ENCODE measurements at regions of chr2 and their contacts with region 1.

Region 1: GRCh38 chr2:223993621-223994232 is 36.5 kb downstream of the MRPL44 start:
- DNase-seq: peak; percentile 11 to 67 (median 62)
- ATAC-seq: peak; percentile 83
- H3K4me3 ChIP-seq: no peak overlapping the region
- H3K4me3 Mint-ChIP-seq: no peak overlapping the region
- H3K27ac ChIP-seq: no peak overlapping the region
- H3K27ac Mint-ChIP-seq: no peak overlapping the region
- H3K4me1 ChIP-seq: no peaks in the 10 kb centered on the region
- H3K4me1 Mint-ChIP-seq: peaks cover 0 to 22% (median 0%) of the 10 kb centered on the region in 7 donors
- H3K27me3 ChIP-seq: no peaks in the 10 kb centered on the region
- H3K27me3 Mint-ChIP-seq: no peaks in the 10 kb centered on the region

Region 2: DNA sequence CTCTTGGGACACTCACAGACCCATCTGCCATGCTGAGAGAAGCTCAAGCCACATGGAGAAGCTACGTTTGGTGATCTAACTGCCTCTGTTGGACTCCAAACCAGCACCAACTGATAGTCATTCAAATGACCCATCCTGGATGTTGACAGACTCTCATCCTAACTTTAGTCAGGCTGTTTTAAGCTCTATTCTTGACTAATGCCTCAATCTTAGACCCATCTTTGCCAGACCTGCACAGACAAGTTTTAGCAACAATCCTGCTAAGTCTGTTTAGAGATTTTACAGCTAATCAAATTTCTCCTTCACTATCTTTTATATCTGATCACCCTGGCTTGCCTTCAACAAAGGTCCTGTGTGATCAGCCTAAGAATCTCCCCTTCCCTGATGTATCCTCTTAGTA is 636.7 kb before region 1 on chr2:
- CTCF ChIA-PET with region 1: no interaction called
- POLR2A ChIA-PET with region 1: no interaction called
- intact Hi-C with region 1: no loop called
- DNase-seq: no peak
- ATAC-seq: no peak
- H3K4me3 ChIP-seq: no peak overlapping the region
- H3K4me3 Mint-ChIP-seq: no peak overlapping the region
- H3K27ac ChIP-seq: no peak overlapping the region
- H3K27ac Mint-ChIP-seq: no peak overlapping the region
- H3K4me1 ChIP-seq: no peaks in the 10 kb centered on the region
- H3K4me1 Mint-ChIP-seq: no peaks in the 10 kb centered on the region
- H3K27me3 ChIP-seq: no peaks in the 10 kb centered on the region
- H3K27me3 Mint-ChIP-seq: no peaks in the 10 kb centered on the region

Region 3: GRCh38 chr2:223970343-223971128 is 23.2 kb before region 1 on chr2:
- CTCF ChIA-PET with region 1: interaction called, 43 read pairs
- POLR2A ChIA-PET with region 1: no interaction called
- intact Hi-C with region 1: loop called (anchors 1 kb)
- DNase-seq: peak in 8 of 9 donors; percentile 27 to 62 (median 54)
- ATAC-seq: peak; percentile 87
- H3K4me3 ChIP-seq: no peak overlapping the region
- H3K4me3 Mint-ChIP-seq: no peak overlapping the region
- H3K27ac ChIP-seq: no peak overlapping the region
- H3K27ac Mint-ChIP-seq: peak overlapping the region in 1 of 9 donors; percentile 28
- H3K4me1 ChIP-seq: no peaks in the 10 kb centered on the region
- H3K4me1 Mint-ChIP-seq: peaks cover 0 to 14% (median 4%) of the 10 kb centered on the region in 7 donors
- H3K27me3 ChIP-seq: no peaks in the 10 kb centered on the region
- H3K27me3 Mint-ChIP-seq: no peaks in the 10 kb centered on the region

Region 4: DNA sequence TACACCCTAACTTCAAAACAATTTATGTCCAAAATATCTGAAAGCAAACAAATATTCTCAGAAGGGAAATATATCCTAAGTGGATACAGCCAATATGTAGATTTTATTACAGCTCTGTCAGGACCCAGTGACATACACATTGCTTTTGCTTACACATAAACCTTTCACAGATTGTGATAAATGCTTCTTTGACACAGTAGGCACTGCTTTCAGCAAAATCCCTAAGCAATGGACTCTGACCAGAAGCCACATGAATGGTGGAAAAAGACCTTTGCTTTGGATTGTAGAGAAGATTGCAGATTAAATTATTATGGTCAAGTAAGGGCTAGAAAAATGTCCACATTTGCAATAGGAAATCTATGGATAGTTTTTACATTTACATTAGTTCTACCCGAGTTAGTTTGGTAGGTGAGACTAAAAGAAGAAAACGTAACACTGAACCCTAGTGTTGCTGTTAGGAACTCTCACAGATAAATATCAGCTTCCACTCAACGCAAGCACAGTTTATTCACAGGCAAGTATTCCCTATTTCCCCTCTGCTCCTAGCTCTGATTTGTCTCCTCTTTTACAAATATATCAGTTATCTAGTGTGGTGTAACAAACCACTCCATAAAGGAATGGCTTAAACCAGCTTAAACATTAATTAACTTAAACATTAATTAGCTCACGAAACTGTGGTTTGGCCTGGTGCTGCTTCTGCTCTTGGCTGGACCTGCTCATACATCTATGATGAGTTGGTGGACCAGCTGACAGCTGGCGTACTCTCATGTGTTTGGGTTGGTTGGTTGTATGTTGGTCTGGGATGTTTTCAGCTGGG is 69.0 kb after region 1 on chr2:
- CTCF ChIA-PET with region 1: interaction called, 46 read pairs
- POLR2A ChIA-PET with region 1: no interaction called
- intact Hi-C with region 1: loop called (anchors 1 kb)
- DNase-seq: peak in 4 of 9 donors; percentile 5 to 15 (median 13)
- ATAC-seq: no peak
- H3K4me3 ChIP-seq: no peak overlapping the region
- H3K4me3 Mint-ChIP-seq: no peak overlapping the region
- H3K27ac ChIP-seq: no peak overlapping the region
- H3K27ac Mint-ChIP-seq: no peak overlapping the region
- H3K4me1 ChIP-seq: no peaks in the 10 kb centered on the region
- H3K4me1 Mint-ChIP-seq: no peaks in the 10 kb centered on the region
- H3K27me3 ChIP-seq: no peaks in the 10 kb centered on the region
- H3K27me3 Mint-ChIP-seq: peaks cover 0 to 6% (median 0%) of the 10 kb centered on the region in 5 donors

Region 5: DNA sequence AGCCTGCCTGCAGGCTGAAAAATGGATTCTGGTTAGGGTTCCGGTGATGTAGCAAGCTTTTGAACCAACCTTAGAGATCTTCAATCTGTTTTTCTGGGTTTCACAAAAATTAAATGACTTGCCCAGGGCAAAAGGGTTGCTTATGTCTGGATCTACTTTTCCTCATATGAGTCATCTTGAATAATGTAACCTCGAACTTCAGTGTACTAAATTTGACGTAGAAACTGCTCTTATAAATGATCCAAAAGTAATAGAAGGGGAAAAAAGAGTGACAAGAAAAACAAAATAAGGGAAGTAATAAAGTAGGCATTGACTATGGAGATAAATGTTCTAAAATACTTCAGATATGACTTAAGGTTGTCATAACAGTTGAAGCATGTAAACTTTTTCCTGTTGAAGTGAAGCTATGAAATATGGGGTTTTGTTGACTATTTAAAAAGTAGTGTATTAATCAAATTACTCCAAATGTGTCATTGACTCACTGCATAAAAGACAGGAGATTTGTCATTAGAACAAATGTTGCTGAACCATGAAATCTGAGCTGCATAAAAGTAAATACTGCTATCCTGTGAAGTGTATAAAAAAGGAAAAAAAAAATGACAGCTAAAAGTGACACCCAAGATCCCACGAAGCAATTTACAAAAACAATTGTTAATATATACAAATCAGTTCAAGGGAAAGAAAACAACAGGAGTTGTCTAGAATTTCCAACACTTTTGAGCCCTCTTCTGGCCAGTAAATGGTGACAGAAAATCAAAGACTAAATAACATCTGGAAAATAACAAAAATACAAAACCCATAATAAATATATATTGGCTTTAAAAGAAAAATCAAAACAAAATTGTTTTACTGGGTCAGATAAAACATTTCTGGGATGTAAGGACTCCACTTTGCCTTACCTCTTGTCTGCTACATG is 148.9 kb after region 1 on chr2:
- CTCF ChIA-PET with region 1: no interaction called
- POLR2A ChIA-PET with region 1: no interaction called
- intact Hi-C with region 1: loop called in 1 of 2 experiments (anchors 1 kb)
- DNase-seq: no peak
- ATAC-seq: no peak
- H3K4me3 ChIP-seq: no peak overlapping the region
- H3K4me3 Mint-ChIP-seq: no peak overlapping the region
- H3K27ac ChIP-seq: no peak overlapping the region
- H3K27ac Mint-ChIP-seq: no peak overlapping the region
- H3K4me1 ChIP-seq: no peaks in the 10 kb centered on the region
- H3K4me1 Mint-ChIP-seq: no peaks in the 10 kb centered on the region
- H3K27me3 ChIP-seq: peaks cover 0 to 2% of the 10 kb centered on the region in 2 donors
- H3K27me3 Mint-ChIP-seq: peaks cover 12 to 34% (median 25%) of the 10 kb centered on the region in 5 donors

Region 6: GRCh38 chr2:224369028-224369632 is 375.4 kb after region 1 on chr2:
- CTCF ChIA-PET with region 1: interaction called, 6 read pairs
- POLR2A ChIA-PET with region 1: no interaction called
- intact Hi-C with region 1: loop called (anchors 1 to 5 kb)
- DNase-seq: peak in 7 of 9 donors; percentile 7 to 38 (median 25)
- ATAC-seq: peak; percentile 61
- H3K4me3 ChIP-seq: no peak overlapping the region
- H3K4me3 Mint-ChIP-seq: no peak overlapping the region
- H3K27ac ChIP-seq: no peak overlapping the region
- H3K27ac Mint-ChIP-seq: no peak overlapping the region
- H3K4me1 ChIP-seq: no peaks in the 10 kb centered on the region
- H3K4me1 Mint-ChIP-seq: peaks cover 0 to 4% (median 0%) of the 10 kb centered on the region in 7 donors
- H3K27me3 ChIP-seq: peaks cover 0 to under 1% of the 10 kb centered on the region in 2 donors
- H3K27me3 Mint-ChIP-seq: peaks cover 0 to 8% (median 3%) of the 10 kb centered on the region in 5 donors

Measured in naive thymus-derived CD4-positive, alpha-beta T cell (primary cell).